Calu3 (cell line): ENCODE measurements at regions of chr18 and their contacts with region 1.

Region 1: DNA sequence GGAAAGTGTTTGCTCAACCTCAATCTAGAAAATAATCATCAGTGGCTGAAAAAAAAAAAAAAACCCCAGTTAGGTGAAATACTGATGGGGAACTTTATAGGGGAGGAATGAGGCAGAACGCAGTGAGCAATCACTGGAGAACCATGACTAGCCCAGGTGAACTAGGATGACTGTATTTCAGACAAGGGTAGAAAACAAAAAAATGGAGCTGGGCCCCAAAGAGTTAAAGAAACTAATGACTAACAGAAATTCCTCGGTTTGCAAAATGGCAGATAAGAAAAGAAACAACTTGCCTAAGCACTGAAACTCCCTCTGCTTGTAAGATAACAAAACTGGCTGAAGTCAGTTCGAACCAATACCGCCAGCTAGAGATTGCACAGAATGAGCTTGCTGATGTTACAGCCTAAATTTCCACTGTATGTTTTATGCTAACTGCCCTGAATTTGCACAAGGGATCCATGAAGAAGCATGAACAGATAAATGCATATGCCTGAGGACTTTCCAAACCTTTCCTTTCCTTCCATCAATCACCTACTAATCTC is 245.9 kb downstream of the METTL4 start:
- DNase-seq: peak; percentile 9
- H3K4me3 Mint-ChIP-seq: no peak overlapping the region
- H3K27ac Mint-ChIP-seq: no peak overlapping the region
- H3K4me1 Mint-ChIP-seq: peaks cover 37% of the 10 kb centered on the region
- H3K27me3 Mint-ChIP-seq: no peaks in the 10 kb centered on the region
- CTCF ChIP-seq: no peak

Region 2: GRCh38 chr18:2406544-2406943 is 81.2 kb after region 1 on chr18:
- CTCF ChIA-PET with region 1: no interaction called
- intact Hi-C with region 1: loop called (anchors 5 kb)
- DNase-seq: no peak
- H3K4me3 Mint-ChIP-seq: no peak overlapping the region
- H3K27ac Mint-ChIP-seq: no peak overlapping the region
- H3K4me1 Mint-ChIP-seq: peaks cover 32% of the 10 kb centered on the region
- H3K27me3 Mint-ChIP-seq: no peaks in the 10 kb centered on the region
- CTCF ChIP-seq: no peak

Region 3: GRCh38 chr18:2515908-2516625 is 190.7 kb after region 1 on chr18:
- CTCF ChIA-PET with region 1: no interaction called
- intact Hi-C with region 1: loop called (anchors 10 kb)
- DNase-seq: peak; percentile 42
- H3K4me3 Mint-ChIP-seq: no peak overlapping the region
- H3K27ac Mint-ChIP-seq: peak overlapping the region; percentile 57
- H3K4me1 Mint-ChIP-seq: peaks cover 24% of the 10 kb centered on the region
- H3K27me3 Mint-ChIP-seq: no peaks in the 10 kb centered on the region
- CTCF ChIP-seq: no peak